ENCODE measurements at regions of chr19 and their contacts with region 1.

Region 1: DNA sequence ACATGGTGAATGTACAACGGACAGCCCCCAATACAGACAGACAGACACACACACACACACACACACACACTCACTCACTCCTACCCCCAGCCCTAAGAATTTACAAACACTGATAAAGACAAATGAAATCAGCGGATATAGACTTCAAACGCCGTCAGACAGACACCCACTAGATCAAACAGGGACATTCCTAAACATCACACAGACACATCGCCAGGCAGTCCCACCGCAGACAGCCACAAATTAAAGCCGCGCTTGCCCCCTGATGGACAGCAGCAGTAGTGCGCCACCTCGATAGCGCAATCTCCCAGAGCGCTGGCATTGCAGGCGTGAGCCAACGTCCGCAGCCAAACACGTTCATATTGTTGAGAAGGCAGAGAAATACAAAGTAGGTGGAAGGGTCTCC is 24.7 kb upstream of the ADGRE1 start:
- DNase-seq: peak; percentile 73 to 86
- ATAC-seq: peak; percentile 84 to 95 (median 87)
- H3K4me3 ChIP-seq: peak overlapping the region; percentile 40
- H3K27ac ChIP-seq: no peak overlapping the region
- H3K4me1 ChIP-seq: no peaks in the 10 kb centered on the region
- H3K27me3 ChIP-seq: peaks cover 0 to 5% (median 0%) of the 10 kb centered on the region in 3 donors
- CTCF ChIP-seq: peak; percentile 75

Region 2: GRCh38 chr19:6516659-6517291 is 345.9 kb before region 1 on chr19:
- intact Hi-C with region 1: loop called in 1 of 2 experiments (anchors 2 kb)
- DNase-seq: peak; percentile 93 to 95
- ATAC-seq: peak; percentile 90 to 95 (median 90)
- H3K4me3 ChIP-seq: peak overlapping the region; percentile 83
- H3K27ac ChIP-seq: peak overlapping the region; percentile 85
- H3K4me1 ChIP-seq: peaks cover 16% of the 10 kb centered on the region
- H3K27me3 ChIP-seq: no peaks in the 10 kb centered on the region
- CTCF ChIP-seq: peak; percentile 90

Region 3: GRCh38 chr19:6530386-6531161 is 332.1 kb before region 1 on chr19 and contains the start of gene TNFSF9:
- intact Hi-C with region 1: loop called in 1 of 2 experiments (anchors 10 kb)
- DNase-seq: peak; percentile 88 to 94
- ATAC-seq: peak; percentile 95 to 98 (median 98)
- H3K4me3 ChIP-seq: peak within 1 kb of the TSS; percentile 74
- H3K27ac ChIP-seq: peak within 1 kb of the TSS; percentile 81
- H3K4me1 ChIP-seq: peaks cover 7% of the 10 kb centered on the region
- H3K27me3 ChIP-seq: peaks cover 0 to 22% (median 15%) of the 10 kb centered on the region in 3 donors
- CTCF ChIP-seq: no peak
- total RNA-seq, gene TNFSF9: 0.66 to 1.9 (median 1.2) TPM in 3 of 4 donors, not detected in the other

Region 4: GRCh38 chr19:6632002-6632621 is 230.6 kb before region 1 on chr19:
- intact Hi-C with region 1: loop called (anchors 2 to 10 kb)
- DNase-seq: no peak
- ATAC-seq: peak in 1 of 4 donors; percentile 69
- H3K4me3 ChIP-seq: no peak overlapping the region
- H3K27ac ChIP-seq: no peak overlapping the region
- H3K4me1 ChIP-seq: no peaks in the 10 kb centered on the region
- H3K27me3 ChIP-seq: peaks cover 0 to 11% (median 0%) of the 10 kb centered on the region in 3 donors
- CTCF ChIP-seq: peak; percentile 83

Region 5: DNA sequence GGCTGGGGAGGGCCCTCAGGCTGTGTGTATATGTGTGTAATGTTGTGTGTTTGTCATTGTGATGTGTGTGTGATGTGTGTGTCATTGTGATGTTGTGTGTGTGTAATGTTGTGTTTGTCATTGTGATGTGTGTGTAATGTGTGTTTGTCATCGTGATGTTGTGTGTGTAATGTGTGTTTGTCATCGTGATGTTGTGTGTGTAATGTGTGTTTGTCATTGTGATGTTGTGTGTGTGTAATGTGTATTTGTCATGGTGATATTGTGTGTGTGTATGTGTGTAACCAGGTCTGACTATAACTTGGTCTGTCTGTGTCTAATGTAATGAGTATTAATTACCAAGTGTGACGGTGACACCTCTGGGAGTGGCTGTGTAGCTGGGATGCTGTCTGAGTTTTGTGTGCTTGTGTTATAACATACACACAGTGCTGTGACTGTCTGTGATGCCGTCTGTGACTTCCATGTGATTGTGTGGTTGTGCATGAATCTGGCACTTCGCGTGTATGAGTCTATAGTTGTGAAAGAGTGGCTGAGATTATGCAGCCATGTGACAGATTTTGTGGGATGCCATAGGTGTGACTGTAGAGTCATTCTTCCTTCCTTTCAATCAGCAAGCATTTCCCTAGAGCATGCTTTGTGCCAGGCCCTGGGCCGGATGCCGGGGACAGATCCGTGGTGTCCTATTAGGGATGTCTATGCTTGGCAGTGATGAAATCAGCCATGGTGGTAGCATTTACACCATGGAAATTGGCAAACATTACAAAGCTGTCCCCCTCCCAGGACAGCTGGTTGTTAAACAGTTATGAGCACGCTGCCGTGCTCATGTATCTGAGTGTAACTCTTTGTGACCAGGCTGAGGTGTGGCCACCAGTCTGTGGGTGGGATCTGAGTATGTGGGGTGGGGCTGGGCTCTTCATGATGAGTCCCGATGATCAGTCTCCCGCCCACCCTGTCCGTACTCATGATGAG is 199.2 kb before region 1 on chr19:
- intact Hi-C with region 1: no loop called
- DNase-seq: no peak
- ATAC-seq: no peak
- H3K4me3 ChIP-seq: no peak overlapping the region
- H3K27ac ChIP-seq: no peak overlapping the region
- H3K4me1 ChIP-seq: no peaks in the 10 kb centered on the region
- H3K27me3 ChIP-seq: peaks cover 0 to 22% (median 4%) of the 10 kb centered on the region in 3 donors
- CTCF ChIP-seq: no peak

Region 6: GRCh38 chr19:6947745-6948144 is 85.1 kb after region 1 on chr19:
- intact Hi-C with region 1: no loop called
- DNase-seq: no peak
- ATAC-seq: no peak
- H3K4me3 ChIP-seq: no peak overlapping the region
- H3K27ac ChIP-seq: no peak overlapping the region
- H3K4me1 ChIP-seq: no peaks in the 10 kb centered on the region
- H3K27me3 ChIP-seq: no peaks in the 10 kb centered on the region
- CTCF ChIP-seq: no peak

Region 7: DNA sequence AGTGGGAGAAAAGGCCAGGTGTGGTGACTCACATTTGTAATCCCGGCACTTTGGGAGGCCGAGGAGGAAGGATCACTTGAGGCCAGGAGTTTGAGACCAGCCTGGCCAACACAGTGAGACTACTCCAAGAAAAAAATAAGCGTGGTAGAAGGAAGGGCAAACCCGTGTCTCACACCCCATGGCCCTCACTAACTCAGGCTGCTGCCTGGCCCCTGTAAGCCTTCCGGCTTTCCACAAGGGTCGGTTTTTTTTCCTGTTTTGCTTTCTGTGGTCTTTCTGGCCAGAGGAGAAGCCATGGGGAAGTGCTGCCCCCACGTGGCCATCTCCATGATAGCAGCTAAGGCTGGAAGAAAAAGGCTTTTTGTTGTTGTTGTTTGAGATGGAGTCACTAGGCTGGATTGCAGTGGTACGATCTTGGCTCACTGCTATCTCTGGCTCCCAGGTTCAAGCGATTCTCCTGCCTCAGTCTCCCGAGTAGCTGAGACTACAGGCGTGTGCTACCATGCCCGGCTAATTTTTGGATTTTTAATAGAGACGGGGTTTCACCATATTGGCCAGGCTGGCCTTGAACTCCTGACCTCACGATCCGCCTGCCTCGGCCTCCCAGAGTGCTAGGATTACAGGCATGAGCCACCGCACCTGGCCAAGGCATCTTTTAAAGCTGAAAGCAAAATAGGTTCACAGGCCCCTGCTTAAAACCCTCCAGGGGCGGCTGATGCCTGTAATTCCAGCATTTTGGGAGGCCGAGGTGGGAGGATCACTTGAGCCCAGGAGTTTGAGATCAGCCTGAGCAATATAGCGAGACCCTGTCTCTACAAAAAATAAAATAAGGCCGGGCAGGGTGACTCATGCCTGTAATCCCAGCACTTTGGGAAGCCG is 478.5 kb after region 1 on chr19:
- intact Hi-C with region 1: no loop called
- DNase-seq: peak; percentile 80 to 86
- ATAC-seq: peak; percentile 51 to 83 (median 60)
- H3K4me3 ChIP-seq: no peak overlapping the region
- H3K27ac ChIP-seq: no peak overlapping the region
- H3K4me1 ChIP-seq: no peaks in the 10 kb centered on the region
- H3K27me3 ChIP-seq: peaks cover 0 to 4% (median 1%) of the 10 kb centered on the region in 3 donors
- CTCF ChIP-seq: peak; percentile 94

Measured in psoas muscle (tissue), 8 donors.